ENCODE measurements at regions of chr19 and their contacts with region 1.

Region 1: DNA sequence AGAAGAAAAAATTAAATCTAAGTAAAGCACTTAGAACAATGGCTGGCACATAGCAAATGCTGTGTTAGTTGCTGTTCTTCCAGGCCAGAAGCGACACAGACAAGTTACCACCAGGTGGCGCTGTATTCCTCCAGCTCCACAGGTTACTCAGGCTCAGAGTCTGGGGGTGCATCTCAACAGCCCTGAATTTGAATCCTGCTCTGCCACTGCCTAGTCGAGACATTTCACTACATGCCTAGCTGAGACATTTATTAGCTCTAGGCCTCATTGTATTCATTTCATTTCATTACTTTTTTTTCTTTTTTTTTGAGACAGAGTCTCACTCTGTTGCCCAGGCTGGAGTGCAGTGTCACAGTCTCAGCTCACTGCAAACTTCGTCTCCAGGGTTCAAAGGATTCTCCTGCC is 16.4 kb upstream of the CYP2B6 start:
- DNase-seq: peak; percentile 69 to 81 (median 71)
- H3K4me3 ChIP-seq: no peak overlapping the region
- H3K27ac ChIP-seq: no peak overlapping the region
- H3K4me1 ChIP-seq: no peaks in the 10 kb centered on the region
- H3K27me3 ChIP-seq: no peaks in the 10 kb centered on the region
- CTCF ChIP-seq: peak; percentile 77

Region 2: DNA sequence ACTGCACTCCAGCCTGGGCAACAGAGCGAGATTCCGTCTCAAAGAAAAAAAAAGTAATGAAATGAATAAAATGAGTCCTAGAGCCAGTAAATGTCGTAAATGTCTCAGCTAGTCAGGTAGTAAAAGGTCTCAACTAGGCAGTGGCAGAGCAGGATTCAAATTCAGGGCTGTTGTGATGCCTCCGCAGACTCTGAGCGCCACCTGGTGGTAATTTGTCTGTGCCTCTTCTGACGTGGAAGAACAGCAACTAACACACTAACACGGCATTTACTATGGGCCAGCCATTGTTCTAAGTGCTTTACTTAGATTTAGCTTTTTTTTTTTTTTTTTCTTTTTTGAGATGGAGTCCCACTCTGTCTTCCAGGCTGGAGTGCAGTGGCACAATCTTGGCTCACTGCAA is 169.8 kb after region 1 on chr19:
- intact Hi-C with region 1: loop called (anchors 10 kb)
- DNase-seq: peak in 4 of 5 donors; percentile 44 to 61 (median 54)
- H3K4me3 ChIP-seq: no peak overlapping the region
- H3K27ac ChIP-seq: no peak overlapping the region
- H3K4me1 ChIP-seq: no peaks in the 10 kb centered on the region
- H3K27me3 ChIP-seq: no peaks in the 10 kb centered on the region
- CTCF ChIP-seq: peak; percentile 85